ENCODE measurements at regions of chr11 and their contacts with region 1.

Region 1: DNA sequence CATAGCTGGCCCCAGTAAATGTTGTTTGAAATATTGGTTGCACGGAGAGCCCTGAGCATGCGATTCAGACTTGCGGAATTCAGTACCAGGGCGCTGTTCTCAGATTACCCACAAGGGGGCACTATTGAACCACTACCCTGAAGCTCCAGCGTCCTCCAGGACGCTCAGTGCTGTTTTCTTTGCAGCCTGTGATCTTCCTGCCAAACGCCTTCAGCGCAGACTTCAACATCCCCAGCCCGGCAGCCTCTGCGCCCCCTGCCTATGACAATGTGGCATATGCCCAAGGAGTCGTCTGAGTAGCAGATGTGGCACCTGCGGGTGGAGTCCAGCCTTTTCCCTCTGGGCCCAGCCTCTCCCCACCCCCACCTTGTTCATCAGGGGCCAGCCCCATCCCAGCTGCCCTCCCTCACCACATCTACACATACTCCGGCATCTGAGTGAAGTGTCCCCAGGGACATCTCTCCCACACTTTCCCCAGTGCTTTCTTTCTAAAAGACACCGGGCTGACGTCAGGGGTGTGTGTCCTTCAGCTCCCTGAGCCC is 9.6 kb upstream of the MS4A10 start:
- DNase-seq: peak; percentile 89
- H3K4me3 Mint-ChIP-seq: no peak overlapping the region
- H3K27ac Mint-ChIP-seq: no peak overlapping the region
- H3K4me1 Mint-ChIP-seq: peaks cover 11% of the 10 kb centered on the region
- H3K27me3 Mint-ChIP-seq: peaks cover 44% of the 10 kb centered on the region
- CTCF ChIP-seq: peak; percentile 91

Region 2: DNA sequence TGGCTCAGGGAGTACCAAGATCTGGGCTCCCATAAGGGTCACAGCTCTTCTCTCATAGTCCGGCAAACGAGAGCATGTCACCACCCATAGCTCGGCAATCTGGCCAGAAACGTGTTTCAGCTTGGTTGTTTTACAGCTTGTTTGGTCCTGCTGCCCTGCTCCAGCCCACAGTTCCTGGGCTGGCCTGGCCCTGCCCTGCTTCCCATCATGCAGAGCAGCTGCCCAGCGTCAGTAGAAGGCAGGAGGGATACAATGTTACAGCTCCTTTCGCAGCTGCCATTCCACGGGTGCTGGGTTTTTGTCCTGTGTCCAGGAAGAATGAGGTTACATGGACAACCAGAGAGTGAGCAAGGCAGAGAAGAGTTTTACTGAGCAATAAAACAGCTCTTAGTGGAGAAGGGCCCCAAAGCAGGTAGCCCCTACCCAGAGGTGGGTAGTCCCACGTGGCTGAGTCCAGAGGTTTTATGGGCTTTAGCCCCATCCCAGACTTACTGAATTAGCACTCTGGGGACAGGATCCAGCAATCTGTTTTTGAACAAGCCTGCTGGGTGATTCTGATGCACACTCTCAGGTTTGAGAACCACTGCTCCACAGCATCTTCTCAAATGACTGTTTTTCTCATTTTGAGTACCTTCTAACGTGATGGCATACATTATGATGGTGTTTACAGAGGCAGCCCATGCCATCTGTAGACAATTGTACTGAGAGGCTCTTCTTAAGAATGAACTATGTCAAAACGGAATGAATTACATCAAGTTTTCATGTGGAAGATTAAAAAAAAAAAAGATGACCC is 56.8 kb before region 1 on chr11:
- CTCF ChIA-PET with region 1: no interaction called
- intact Hi-C with region 1: no loop called
- DNase-seq: no peak
- H3K4me3 Mint-ChIP-seq: no peak overlapping the region
- H3K27ac Mint-ChIP-seq: no peak overlapping the region
- H3K4me1 Mint-ChIP-seq: no peaks in the 10 kb centered on the region
- H3K27me3 Mint-ChIP-seq: peaks cover 55% of the 10 kb centered on the region
- CTCF ChIP-seq: no peak

Region 3: GRCh38 chr11:60887556-60887955 is 112.1 kb after region 1 on chr11:
- CTCF ChIA-PET with region 1: interaction called, 20 read pairs
- intact Hi-C with region 1: loop called (anchors 1 kb)
- DNase-seq: peak; percentile 47
- H3K4me3 Mint-ChIP-seq: no peak overlapping the region
- H3K27ac Mint-ChIP-seq: no peak overlapping the region
- H3K4me1 Mint-ChIP-seq: no peaks in the 10 kb centered on the region
- H3K27me3 Mint-ChIP-seq: no peaks in the 10 kb centered on the region
- CTCF ChIP-seq: peak; percentile 30

Region 4: DNA sequence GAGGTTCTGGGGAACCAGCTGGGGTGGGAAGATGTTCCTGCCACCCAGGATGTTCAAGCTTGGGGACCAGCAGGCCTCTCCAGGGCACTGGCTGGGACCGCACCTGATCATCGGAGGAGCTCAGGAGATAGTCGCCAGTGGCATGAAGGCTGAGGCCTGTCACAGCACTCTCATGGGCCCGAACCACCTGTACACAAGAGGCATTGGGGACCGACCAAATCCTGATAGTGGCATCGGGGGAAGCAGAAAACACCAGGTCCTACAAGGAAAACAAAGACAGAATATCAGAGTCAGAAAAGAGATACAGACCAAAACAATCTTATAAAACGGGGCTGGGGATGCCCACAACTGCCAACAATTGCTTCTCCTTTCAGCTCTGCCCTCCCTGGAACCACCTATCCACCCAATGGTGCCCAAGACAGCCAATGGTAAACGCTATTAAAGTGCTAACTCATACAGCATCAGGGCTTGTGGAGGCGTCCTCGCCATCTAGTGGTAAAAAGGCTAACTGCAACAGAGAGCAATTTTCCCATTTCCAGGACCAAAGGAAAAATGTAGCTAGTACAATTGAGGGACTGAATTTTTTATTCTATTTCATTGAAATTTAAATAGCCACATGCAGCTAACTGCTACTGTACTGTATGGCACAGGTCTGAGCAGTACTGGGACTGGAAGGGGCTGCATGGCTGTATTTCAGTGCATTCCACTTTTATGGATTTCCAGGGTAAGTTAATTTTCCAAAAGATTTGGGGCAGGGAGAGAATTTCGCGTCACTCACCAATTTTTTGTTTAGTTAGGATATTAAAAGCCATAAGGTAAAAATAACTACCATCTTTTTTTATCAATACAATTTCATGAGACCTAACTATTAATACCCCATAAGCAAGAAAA is 123.8 kb after region 1 on chr11:
- CTCF ChIA-PET with region 1: interaction called, 9 read pairs
- intact Hi-C with region 1: loop called (anchors 1 kb)
- DNase-seq: peak; percentile 58
- H3K4me3 Mint-ChIP-seq: no peak overlapping the region
- H3K27ac Mint-ChIP-seq: no peak overlapping the region
- H3K4me1 Mint-ChIP-seq: peaks cover 9% of the 10 kb centered on the region
- H3K27me3 Mint-ChIP-seq: no peaks in the 10 kb centered on the region
- CTCF ChIP-seq: peak; percentile 72